ENCODE measurements at regions of chr1 and their contacts with region 1.

Region 1: DNA sequence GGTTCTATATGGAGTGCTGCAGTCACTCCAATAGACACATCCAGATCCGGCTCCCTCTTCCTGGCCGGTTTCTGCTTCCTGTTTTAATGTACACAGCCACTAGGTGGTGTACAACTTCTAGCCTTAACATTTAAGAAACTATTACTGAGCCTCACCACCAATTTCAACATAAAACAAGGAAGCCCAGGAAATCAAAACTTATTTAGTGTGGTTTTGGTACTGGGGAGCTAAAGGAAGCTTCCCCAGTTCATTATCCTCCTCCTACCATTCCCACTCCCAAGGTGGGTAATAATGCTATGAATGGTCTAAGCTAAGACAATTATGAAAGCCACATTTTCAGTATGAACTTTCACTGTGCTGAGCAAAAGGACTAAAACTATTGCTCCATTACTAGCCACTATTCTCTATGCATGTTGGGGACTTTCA is 25.5 kb upstream of the MTMR11 start:
- DNase-seq: peak; percentile 46 to 60
- H3K4me3 ChIP-seq: no peak overlapping the region
- H3K27ac ChIP-seq: peak overlapping the region; percentile 11 to 37
- H3K4me1 ChIP-seq: no peaks in the 10 kb centered on the region
- H3K27me3 ChIP-seq: no peaks in the 10 kb centered on the region
- CTCF ChIP-seq: peak; percentile 79 to 86 (median 84)
- POLR2A ChIP-seq: no peak

Region 2: DNA sequence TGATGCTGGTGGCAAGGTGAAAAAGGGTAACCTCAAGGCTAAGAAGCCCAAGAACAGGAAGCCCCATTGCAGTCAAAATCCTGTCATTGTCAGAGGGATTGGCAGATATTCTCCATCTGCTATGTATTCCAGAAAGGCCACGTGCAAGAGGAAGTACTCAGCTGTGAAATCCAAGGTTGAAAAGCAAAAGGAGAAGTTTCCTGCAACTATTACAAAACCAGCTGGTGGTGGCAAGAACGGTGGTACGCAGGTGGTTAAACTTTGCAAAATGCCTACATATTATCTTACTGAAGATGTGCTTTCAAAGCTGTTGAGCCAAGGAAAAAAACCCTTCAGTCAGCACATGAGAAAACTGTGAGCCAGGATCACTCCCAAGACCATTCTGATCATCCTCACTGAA is 91.8 kb after region 1 on chr1:
- intact Hi-C with region 1: loop called (anchors 5 kb)
- DNase-seq: no peak
- H3K4me3 ChIP-seq: no peak overlapping the region
- H3K27ac ChIP-seq: no peak overlapping the region
- H3K4me1 ChIP-seq: no peaks in the 10 kb centered on the region
- H3K27me3 ChIP-seq: no peaks in the 10 kb centered on the region
- CTCF ChIP-seq: no peak
- POLR2A ChIP-seq: no peak

Region 3: DNA sequence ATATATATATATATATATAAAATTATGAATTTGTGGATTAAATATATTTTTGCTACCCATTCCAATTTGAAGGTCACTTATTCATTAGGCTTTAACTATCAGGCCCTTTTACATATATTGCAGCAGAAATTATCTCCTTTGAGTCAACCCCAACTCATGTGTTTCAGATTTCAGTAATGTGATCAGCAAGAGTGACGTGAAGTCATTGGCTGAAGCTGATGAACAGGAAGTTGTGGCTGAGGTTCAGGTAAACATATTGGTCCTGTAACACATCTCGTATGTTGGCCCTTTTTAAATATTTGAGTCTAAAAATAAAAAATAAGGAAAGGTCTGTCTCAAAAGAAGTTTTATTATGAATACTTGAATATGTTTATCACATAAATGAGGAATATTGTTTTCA is 113.9 kb after region 1 on chr1:
- intact Hi-C with region 1: no loop called
- DNase-seq: no peak
- H3K4me3 ChIP-seq: no peak overlapping the region
- H3K27ac ChIP-seq: no peak overlapping the region
- H3K4me1 ChIP-seq: no peaks in the 10 kb centered on the region
- H3K27me3 ChIP-seq: no peaks in the 10 kb centered on the region
- CTCF ChIP-seq: no peak
- POLR2A ChIP-seq: no peak

Region 4: DNA sequence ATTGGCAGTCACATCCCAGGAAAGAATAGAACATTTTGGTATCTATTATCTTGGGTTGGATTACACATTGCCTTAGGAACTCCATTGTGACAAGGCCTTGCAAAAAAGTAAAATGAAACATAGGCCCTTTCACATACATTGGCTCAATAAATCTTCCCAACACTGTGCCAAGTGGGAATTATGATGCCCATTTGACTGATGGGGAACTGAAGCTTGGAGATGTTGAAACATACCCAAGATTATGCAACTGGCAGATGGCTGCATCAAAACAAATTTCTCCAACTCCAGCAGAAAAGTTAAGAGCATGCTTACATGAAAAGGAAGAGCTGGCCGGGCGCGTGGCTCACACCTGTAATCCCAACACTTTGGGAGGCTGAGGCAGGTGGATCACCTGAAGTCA is 214.5 kb after region 1 on chr1:
- intact Hi-C with region 1: loop called (anchors 10 kb)
- DNase-seq: no peak
- H3K4me3 ChIP-seq: no peak overlapping the region
- H3K27ac ChIP-seq: no peak overlapping the region
- H3K4me1 ChIP-seq: no peaks in the 10 kb centered on the region
- H3K27me3 ChIP-seq: no peaks in the 10 kb centered on the region
- CTCF ChIP-seq: no peak
- POLR2A ChIP-seq: no peak